ENCODE measurements at regions of chr17 and their contacts with region 1.

Region 1: DNA sequence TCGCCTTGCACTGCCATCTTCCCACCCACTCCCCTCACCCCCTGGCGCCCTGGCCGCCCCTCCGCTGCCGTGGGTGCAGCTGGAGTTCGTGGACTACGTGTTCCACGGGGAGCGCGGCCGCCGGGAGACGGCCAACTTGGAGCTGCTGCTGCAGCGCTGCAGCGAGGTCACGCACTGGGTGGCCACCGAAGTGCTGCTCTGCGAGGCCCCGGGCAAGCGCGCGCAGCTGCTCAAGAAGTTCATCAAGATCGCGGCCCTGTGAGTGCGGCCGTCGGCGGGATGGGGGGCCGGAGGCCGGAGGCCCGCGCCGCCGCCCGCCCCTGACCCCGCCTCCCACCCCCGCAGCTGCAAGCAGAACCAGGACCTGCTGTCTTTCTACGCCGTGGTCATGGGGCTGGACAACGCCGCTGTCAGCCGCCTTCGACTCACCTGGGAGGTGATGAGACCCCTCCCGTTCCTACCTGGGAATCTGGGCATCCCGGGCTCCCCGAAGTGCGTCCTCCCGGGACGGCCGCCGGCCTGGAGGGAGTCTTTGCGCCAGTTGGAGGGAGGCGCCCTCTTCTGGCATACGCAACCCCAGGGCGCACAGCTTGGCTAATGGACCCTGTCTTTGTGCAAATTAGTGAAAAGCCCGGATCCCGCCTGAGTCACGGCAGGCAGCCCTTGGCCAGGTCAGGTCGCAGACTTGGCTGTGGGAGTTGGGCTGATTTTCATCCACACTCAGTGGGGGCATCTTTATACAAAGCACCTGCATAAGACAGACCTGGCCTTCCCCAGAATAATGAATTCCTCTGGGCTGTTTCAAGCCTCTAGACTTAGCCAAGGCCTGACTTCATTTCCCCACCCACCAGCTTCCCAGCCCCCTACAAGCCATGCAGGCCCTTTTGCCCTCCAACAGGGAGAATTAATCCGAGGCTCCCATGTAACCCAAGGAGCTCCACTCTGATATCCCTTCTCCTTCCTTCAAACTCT is 14.3 kb downstream of the RAPGEFL1 start:
- DNase-seq: peak; percentile 46 to 75 (median 50)
- H3K4me3 ChIP-seq: peak overlapping the region; percentile 62
- H3K4me3 Mint-ChIP-seq: peak overlapping the region; percentile 84 to 97 (median 92)
- H3K27ac ChIP-seq: no peak overlapping the region
- H3K27ac Mint-ChIP-seq: peak overlapping the region in 2 of 8 donors; percentile 68 to 88
- H3K4me1 ChIP-seq: peaks cover 5% of the 10 kb centered on the region
- H3K4me1 Mint-ChIP-seq: peaks cover 5 to 9% (median 6%) of the 10 kb centered on the region in 3 donors
- H3K27me3 ChIP-seq: no peaks in the 10 kb centered on the region
- H3K27me3 Mint-ChIP-seq: peaks cover 0 to 1% of the 10 kb centered on the region in 2 donors

Region 2: GRCh38 chr17:40015005-40015997 is 176.2 kb before region 1 on chr17 and contains the start of gene CSF3:
- CTCF ChIA-PET with region 1: interaction called, 41 read pairs
- POLR2A ChIA-PET with region 1: no interaction called
- DNase-seq: no peak
- H3K4me3 ChIP-seq: no peak within 1 kb of the TSS
- H3K4me3 Mint-ChIP-seq: peak within 1 kb of the TSS in 1 of 7 donors; percentile 65
- H3K27ac ChIP-seq: no peak within 1 kb of the TSS
- H3K27ac Mint-ChIP-seq: no peak within 1 kb of the TSS
- H3K4me1 ChIP-seq: peaks cover 4% of the 10 kb centered on the region
- H3K4me1 Mint-ChIP-seq: peaks cover 5 to 15% (median 6%) of the 10 kb centered on the region in 3 donors
- H3K27me3 ChIP-seq: no peaks in the 10 kb centered on the region
- H3K27me3 Mint-ChIP-seq: peaks cover 2 to 5% of the 10 kb centered on the region in 2 donors
- total RNA-seq, gene CSF3: not detected

Region 3: GRCh38 chr17:40177275-40177874 is 14.1 kb before region 1 on chr17 and contains the start of gene RAPGEFL1:
- CTCF ChIA-PET with region 1: interaction called, 14 read pairs
- POLR2A ChIA-PET with region 1: interaction called, 3 read pairs
- DNase-seq: peak; percentile 68 to 84 (median 74)
- H3K4me3 ChIP-seq: no peak within 1 kb of the TSS
- H3K4me3 Mint-ChIP-seq: peak within 1 kb of the TSS; percentile 17 to 76 (median 62)
- H3K27ac ChIP-seq: no peak within 1 kb of the TSS
- H3K27ac Mint-ChIP-seq: peak within 1 kb of the TSS in 4 of 8 donors; percentile 45 to 87 (median 68)
- H3K4me1 ChIP-seq: peaks cover 10% of the 10 kb centered on the region
- H3K4me1 Mint-ChIP-seq: peaks cover 7 to 8% (median 8%) of the 10 kb centered on the region in 3 donors
- H3K27me3 ChIP-seq: no peaks in the 10 kb centered on the region
- H3K27me3 Mint-ChIP-seq: no peaks in the 10 kb centered on the region
- total RNA-seq, gene RAPGEFL1: 5.7 to 6.3 TPM

Region 4: GRCh38 chr17:40219073-40219860 is 27.7 kb after region 1 on chr17 and contains the start of gene WIPF2:
- CTCF ChIA-PET with region 1: interaction called, 10 read pairs
- POLR2A ChIA-PET with region 1: no interaction called
- DNase-seq: peak; percentile 95 to 97 (median 96)
- H3K4me3 ChIP-seq: peak within 1 kb of the TSS; percentile 90
- H3K4me3 Mint-ChIP-seq: peak within 1 kb of the TSS; percentile 84 to 97 (median 91)
- H3K27ac ChIP-seq: peak within 1 kb of the TSS; percentile 99
- H3K27ac Mint-ChIP-seq: peak within 1 kb of the TSS; percentile 93 to 100 (median 100)
- H3K4me1 ChIP-seq: peaks cover 15% of the 10 kb centered on the region
- H3K4me1 Mint-ChIP-seq: peaks cover 22 to 48% (median 38%) of the 10 kb centered on the region in 3 donors
- H3K27me3 ChIP-seq: no peaks in the 10 kb centered on the region
- H3K27me3 Mint-ChIP-seq: no peaks in the 10 kb centered on the region
- total RNA-seq, gene WIPF2: 24.5 to 24.7 TPM

Measured in CD8-positive, alpha-beta memory T cell (primary cell).